MCF 10A (cell line): ENCODE measurements at regions of chr13 and their contacts with region 1.

Region 1: GRCh38 chr13:26887594-26887993 is 127.0 kb upstream of the GPR12 start:
- DNase-seq: no peak
- H3K4me3 Mint-ChIP-seq: no peak overlapping the region
- H3K27ac Mint-ChIP-seq: no peak overlapping the region
- H3K4me1 Mint-ChIP-seq: no peaks in the 10 kb centered on the region
- H3K27me3 Mint-ChIP-seq: no peaks in the 10 kb centered on the region
- CTCF ChIP-seq: no peak

Region 2: DNA sequence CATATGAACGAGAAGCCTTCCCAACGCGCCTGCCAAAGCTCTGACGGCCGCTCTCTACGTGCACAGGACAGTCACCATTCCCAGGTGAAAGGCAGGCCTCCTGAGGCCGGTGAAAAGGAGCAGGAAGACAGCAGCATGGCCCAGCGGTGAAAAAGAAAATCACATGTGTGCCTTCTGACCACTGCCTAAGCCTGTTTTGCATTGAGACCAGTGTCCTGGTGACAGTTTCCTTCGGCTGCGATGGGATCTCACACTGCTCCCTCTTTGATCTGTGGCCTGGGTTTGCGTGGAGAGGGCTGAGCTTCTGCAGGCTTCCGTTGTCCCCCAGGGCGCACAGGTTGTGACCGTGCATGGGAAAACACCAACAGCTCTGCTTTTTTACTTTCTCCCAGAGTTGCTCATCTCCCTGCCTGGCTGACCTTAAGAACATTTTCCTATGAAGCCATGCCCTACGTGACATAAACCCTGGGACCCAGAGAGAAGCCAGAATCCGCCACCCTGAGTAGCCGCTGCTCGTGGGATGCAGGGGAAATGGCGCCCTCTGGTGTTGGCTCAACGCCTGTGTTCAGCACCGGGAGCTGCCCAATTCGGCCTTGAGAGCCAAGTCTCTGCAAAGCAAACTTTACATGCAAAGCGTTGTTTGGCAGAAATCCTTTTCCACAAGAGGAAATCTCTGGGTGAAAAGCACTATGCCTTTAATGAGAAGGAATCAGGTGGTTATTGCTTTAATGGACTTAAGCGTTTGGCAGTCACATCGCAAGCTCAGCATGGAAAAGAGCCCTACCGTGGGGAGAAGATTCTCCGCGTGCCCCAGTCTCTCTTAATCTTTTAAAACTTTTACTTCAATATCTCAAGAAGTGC is 14.8 kb before region 1 on chr13:
- CTCF ChIA-PET with region 1: interaction called, 10 read pairs
- POLR2A ChIA-PET with region 1: no interaction called
- intact Hi-C with region 1: no loop called
- DNase-seq: peak; percentile 54
- H3K4me3 Mint-ChIP-seq: no peak overlapping the region
- H3K27ac Mint-ChIP-seq: no peak overlapping the region
- H3K4me1 Mint-ChIP-seq: no peaks in the 10 kb centered on the region
- H3K27me3 Mint-ChIP-seq: peaks cover 19% of the 10 kb centered on the region
- CTCF ChIP-seq: peak; percentile 79